SK-N-SH (cell line): ENCODE measurements at regions of chr4 and their contacts with region 1.

Region 1: GRCh38 chr4:111268769-111269414 is 646.0 kb upstream of the PITX2 start:
- DNase-seq: no peak
- H3K4me3 ChIP-seq: no peak overlapping the region
- H3K27ac ChIP-seq: no peak overlapping the region; a peak in 1 of 4 replicates
- H3K4me1 ChIP-seq: peaks cover 0 to 4% of the 10 kb centered on the region in 2 experiments; a peak in 2 of 4 replicates
- H3K27me3 ChIP-seq: peaks cover 21% of the 10 kb centered on the region; the same call in 1 of the 2 replicates
- CTCF ChIP-seq: no peak
- EP300 ChIP-seq: no peak
- RAD21 ChIP-seq: no peak

Region 2: GRCh38 chr4:111283061-111283677 is 14.3 kb after region 1 on chr4:
- CTCF ChIA-PET with region 1: interaction called, 10 read pairs
- POLR2A ChIA-PET with region 1: no interaction called
- DNase-seq: peak; percentile 30
- H3K4me3 ChIP-seq: peak overlapping the region in 1 of 2 experiments; percentile 38; a peak in 1 of 4 replicates
- H3K27ac ChIP-seq: no peak overlapping the region
- H3K4me1 ChIP-seq: no peaks in the 10 kb centered on the region
- H3K27me3 ChIP-seq: no peaks in the 10 kb centered on the region
- CTCF ChIP-seq: peak; percentile 88
- EP300 ChIP-seq: no peak
- RAD21 ChIP-seq: peak; percentile 53